ENCODE measurements at regions of chr16 and their contacts with region 1.

Region 1: DNA sequence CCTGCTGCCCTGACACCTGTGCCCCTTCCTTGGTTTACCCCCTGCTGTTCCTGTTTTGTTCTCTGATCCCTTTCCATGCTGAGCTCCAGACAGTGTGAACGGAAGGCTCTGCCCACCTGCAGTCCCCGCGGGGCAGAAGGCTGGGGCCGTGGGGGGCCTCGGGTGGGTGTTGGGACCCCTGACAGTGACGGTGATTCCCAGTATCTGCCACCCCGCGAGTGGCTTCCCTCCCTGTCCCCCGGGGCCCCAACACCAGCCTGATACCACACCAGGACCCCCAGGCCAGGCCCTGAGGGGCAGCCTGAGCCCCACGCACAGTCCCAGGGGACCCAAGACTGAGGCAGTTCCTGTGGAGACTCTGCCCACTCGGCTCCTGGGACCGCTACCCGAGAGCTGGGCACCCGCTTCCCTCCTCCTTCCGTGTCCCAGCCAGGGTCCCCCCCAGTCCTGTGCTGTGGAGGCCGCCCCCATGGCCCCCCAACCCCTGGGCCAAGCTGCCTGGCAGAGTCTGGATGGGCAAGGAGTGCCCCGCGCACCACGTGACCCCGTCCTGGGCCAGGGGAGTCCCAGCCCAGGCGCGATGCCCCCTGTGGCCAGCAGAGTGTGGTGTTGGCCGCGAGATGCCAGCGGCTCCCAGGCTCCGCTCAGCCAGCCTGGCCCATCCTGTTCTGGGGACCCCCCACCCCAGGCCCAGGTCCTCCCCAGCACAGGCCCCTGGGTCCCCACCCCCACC is 10.0 kb upstream of the C1QTNF8 start:
- DNase-seq: peak; percentile 77 to 88 (median 88)
- H3K4me3 ChIP-seq: no peak overlapping the region
- H3K27ac ChIP-seq: no peak overlapping the region
- H3K4me1 ChIP-seq: peaks cover 12% of the 10 kb centered on the region
- H3K27me3 ChIP-seq: no peaks in the 10 kb centered on the region
- CTCF ChIP-seq: peak; percentile 81 to 96 (median 89)
- EP300 ChIP-seq: no peak
- POLR2A ChIP-seq: no peak

Region 2: DNA sequence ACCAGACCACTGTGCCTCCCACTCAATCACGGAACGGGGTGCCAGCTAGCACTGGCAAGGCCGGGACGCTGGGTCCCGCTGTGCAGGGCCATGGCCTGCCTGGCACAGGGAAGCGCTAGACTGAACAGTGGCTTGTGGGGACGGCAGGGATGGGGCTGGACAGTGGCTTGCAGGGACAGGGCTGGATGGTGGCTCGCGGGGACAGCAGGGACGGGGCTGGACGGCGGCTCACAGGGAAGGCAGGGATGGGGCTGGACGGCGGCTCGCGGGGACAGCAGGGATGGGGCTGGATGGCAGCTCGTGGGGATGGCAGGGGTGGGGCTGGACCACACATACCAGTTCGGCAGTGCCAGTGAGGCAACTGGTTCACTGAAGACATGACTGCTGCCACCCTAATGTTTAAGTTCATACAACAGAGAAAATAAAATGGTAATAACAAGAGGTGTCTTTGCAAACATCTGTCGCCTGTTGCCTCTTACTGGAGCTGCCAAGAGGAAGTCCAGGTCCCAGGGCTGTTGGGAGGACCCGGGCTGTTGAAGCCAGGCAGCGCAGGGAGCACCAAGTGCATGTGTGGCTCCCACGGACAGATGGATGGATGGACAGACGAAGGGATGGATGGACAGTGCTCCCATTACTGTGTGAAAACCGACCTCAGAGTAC is 167.8 kb before region 1 on chr16:
- intact Hi-C with region 1: no loop called
- DNase-seq: no peak
- H3K4me3 ChIP-seq: no peak overlapping the region
- H3K27ac ChIP-seq: no peak overlapping the region
- H3K4me1 ChIP-seq: no peaks in the 10 kb centered on the region
- H3K27me3 ChIP-seq: no peaks in the 10 kb centered on the region
- CTCF ChIP-seq: no peak
- EP300 ChIP-seq: no peak
- POLR2A ChIP-seq: no peak

Region 3: DNA sequence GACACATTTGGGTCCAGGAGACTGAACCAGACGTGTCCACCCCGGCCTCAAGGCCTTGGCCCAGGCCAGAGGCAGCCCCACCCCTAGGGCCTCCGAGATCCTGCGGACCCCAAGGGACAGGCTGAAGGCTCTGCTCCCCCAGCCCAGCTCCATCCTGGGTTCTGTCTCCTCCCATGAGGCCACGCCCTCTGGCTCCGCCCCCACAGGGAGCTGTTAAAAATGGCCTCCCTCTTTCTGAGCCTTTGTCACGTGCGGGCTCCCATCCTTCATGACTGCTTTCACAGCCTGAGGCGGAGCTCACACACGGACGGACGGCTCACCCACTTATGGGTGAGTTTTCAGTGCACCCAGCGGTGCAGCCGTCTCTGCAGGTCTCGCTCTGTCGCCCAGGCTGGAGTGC is 40.4 kb after region 1 on chr16:
- intact Hi-C with region 1: no loop called
- DNase-seq: peak in 3 of 5 donors; percentile 57 to 78 (median 59)
- H3K4me3 ChIP-seq: no peak overlapping the region
- H3K27ac ChIP-seq: peak overlapping the region; percentile 11 to 46
- H3K4me1 ChIP-seq: peaks cover 6% of the 10 kb centered on the region
- H3K27me3 ChIP-seq: no peaks in the 10 kb centered on the region
- CTCF ChIP-seq: no peak
- EP300 ChIP-seq: no peak
- POLR2A ChIP-seq: no peak

Region 4: GRCh38 chr16:1188432-1189189 is 82.6 kb after region 1 on chr16:
- intact Hi-C with region 1: loop called in 2 of 4 experiments (anchors 2 kb)
- DNase-seq: peak; percentile 61 to 79 (median 75)
- H3K4me3 ChIP-seq: no peak overlapping the region
- H3K27ac ChIP-seq: no peak overlapping the region
- H3K4me1 ChIP-seq: peaks cover 7% of the 10 kb centered on the region
- H3K27me3 ChIP-seq: no peaks in the 10 kb centered on the region
- CTCF ChIP-seq: no peak
- EP300 ChIP-seq: no peak
- POLR2A ChIP-seq: no peak

Region 5: GRCh38 chr16:1194665-1195392 is 88.8 kb after region 1 on chr16:
- intact Hi-C with region 1: loop called in 3 of 4 experiments (anchors 1 to 2 kb)
- DNase-seq: peak in 1 of 5 donors; percentile 68
- H3K4me3 ChIP-seq: no peak overlapping the region
- H3K27ac ChIP-seq: peak overlapping the region in 1 of 2 donors; percentile 53
- H3K4me1 ChIP-seq: peaks cover 2% of the 10 kb centered on the region
- H3K27me3 ChIP-seq: no peaks in the 10 kb centered on the region
- CTCF ChIP-seq: peak; percentile 84 to 96 (median 92)
- EP300 ChIP-seq: no peak
- POLR2A ChIP-seq: peak; percentile 11